Naive thymus-derived CD4-positive, alpha-beta T cell (primary cell): ENCODE measurements at regions of chr11 and their contacts with region 1.

Region 1: DNA sequence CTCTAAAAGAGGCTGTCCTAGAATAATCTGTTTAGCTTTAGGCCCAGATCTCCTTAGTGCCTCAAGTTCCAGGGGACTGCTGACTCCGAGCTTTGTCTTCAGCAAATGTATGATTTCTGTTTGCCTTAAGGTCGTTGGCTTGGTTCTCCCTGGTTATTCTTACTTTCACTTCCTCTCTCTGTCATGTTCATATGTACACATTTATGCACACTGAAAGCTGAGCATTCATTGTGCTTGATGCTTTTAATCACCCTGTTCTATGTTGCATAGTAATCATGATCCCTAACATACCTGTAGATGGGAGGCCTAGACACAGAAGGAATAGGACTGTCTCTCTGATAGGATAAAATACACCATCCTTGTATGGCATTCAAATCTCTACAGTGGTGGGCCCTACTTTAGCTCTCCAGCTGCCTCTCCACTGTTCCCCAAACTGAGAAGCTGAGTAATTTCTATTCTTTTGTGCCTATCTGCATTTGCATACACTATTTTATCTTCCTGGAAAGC is 7.2 kb downstream of the PPFIBP2 start:
- DNase-seq: peak in 1 of 9 donors; percentile 12
- ATAC-seq: peak; percentile 75
- H3K4me3 ChIP-seq: peak overlapping the region; percentile 22
- H3K4me3 Mint-ChIP-seq: no peak overlapping the region
- H3K27ac ChIP-seq: peak overlapping the region; percentile 54
- H3K27ac Mint-ChIP-seq: no peak overlapping the region
- H3K4me1 ChIP-seq: peaks cover 4 to 64% of the 10 kb centered on the region in 2 donors
- H3K4me1 Mint-ChIP-seq: peaks cover 17 to 63% (median 37%) of the 10 kb centered on the region in 7 donors
- H3K27me3 ChIP-seq: no peaks in the 10 kb centered on the region
- H3K27me3 Mint-ChIP-seq: peaks cover 0 to 13% (median 0%) of the 10 kb centered on the region in 5 donors

Region 2: GRCh38 chr11:6855971-6856541 is 665.0 kb before region 1 on chr11:
- CTCF ChIA-PET with region 1: no interaction called
- POLR2A ChIA-PET with region 1: no interaction called
- intact Hi-C with region 1: no loop called
- DNase-seq: no peak
- ATAC-seq: no peak
- H3K4me3 ChIP-seq: no peak overlapping the region
- H3K4me3 Mint-ChIP-seq: no peak overlapping the region
- H3K27ac ChIP-seq: no peak overlapping the region
- H3K27ac Mint-ChIP-seq: no peak overlapping the region
- H3K4me1 ChIP-seq: no peaks in the 10 kb centered on the region
- H3K4me1 Mint-ChIP-seq: peaks cover 0 to 6% (median 0%) of the 10 kb centered on the region in 7 donors
- H3K27me3 ChIP-seq: peaks cover 0 to 5% of the 10 kb centered on the region in 2 donors
- H3K27me3 Mint-ChIP-seq: peaks cover 0 to 23% (median 15%) of the 10 kb centered on the region in 5 donors

Region 3: GRCh38 chr11:7536100-7536499 is 15.1 kb after region 1 on chr11:
- CTCF ChIA-PET with region 1: interaction called, 50 read pairs
- POLR2A ChIA-PET with region 1: interaction called, 17 read pairs
- intact Hi-C with region 1: loop called in 1 of 2 experiments (anchors 2 kb)
- DNase-seq: no peak
- ATAC-seq: peak; percentile 48
- H3K4me3 ChIP-seq: no peak overlapping the region
- H3K4me3 Mint-ChIP-seq: peak overlapping the region in 4 of 10 donors; percentile 53 to 67 (median 56)
- H3K27ac ChIP-seq: no peak overlapping the region
- H3K27ac Mint-ChIP-seq: peak overlapping the region in 3 of 9 donors; percentile 26 to 69 (median 48)
- H3K4me1 ChIP-seq: peaks cover 5 to 43% of the 10 kb centered on the region in 2 donors
- H3K4me1 Mint-ChIP-seq: peaks cover 37 to 88% (median 81%) of the 10 kb centered on the region in 7 donors
- H3K27me3 ChIP-seq: no peaks in the 10 kb centered on the region
- H3K27me3 Mint-ChIP-seq: peaks cover 0 to 23% (median 0%) of the 10 kb centered on the region in 5 donors